Mucosa of descending colon (tissue), 3 donors: ENCODE measurements at regions of chr15 and their contacts with region 1.

Region 1: DNA sequence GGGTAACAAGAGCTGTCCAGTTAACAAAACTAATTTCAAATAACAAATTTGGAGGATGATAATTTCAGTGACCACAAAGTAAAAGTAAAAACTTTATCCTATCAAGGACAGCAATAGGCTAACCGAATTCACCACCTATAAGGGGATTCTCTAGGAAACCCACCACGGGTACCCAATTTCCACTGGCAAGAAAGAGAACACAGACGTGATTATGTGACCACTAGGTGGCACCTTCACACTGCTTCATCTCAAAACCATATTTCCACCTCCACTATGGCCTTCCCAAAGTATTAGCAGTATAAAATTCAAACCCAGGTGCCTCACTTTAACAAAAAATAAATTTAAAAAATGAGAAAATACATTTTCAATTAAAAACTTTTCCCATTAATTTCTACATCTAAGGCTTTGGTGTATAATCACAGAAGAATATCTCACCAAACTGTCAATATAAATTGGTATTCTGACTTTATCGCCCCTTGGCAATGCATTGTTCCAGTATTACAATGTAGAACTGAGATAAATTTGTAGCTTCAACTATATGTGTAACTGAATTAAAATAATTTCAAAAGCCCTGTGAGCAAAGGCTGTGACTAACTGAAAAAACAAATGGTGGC is 96.5 kb downstream of the FSIP1 start:
- DNase-seq: peak in 1 of 3 donors; percentile 79
- ATAC-seq: peak; percentile 84
- H3K4me3 ChIP-seq: no peak overlapping the region
- H3K4me1 ChIP-seq: no peaks in the 10 kb centered on the region
- CTCF ChIP-seq: peak; percentile 61

Region 2: GRCh38 chr15:39530466-39531342 is 155.4 kb before region 1 on chr15:
- intact Hi-C with region 1: no loop called
- DNase-seq: no peak
- ATAC-seq: no peak
- H3K4me3 ChIP-seq: no peak overlapping the region
- H3K4me1 ChIP-seq: no peaks in the 10 kb centered on the region
- CTCF ChIP-seq: no peak

Region 3: DNA sequence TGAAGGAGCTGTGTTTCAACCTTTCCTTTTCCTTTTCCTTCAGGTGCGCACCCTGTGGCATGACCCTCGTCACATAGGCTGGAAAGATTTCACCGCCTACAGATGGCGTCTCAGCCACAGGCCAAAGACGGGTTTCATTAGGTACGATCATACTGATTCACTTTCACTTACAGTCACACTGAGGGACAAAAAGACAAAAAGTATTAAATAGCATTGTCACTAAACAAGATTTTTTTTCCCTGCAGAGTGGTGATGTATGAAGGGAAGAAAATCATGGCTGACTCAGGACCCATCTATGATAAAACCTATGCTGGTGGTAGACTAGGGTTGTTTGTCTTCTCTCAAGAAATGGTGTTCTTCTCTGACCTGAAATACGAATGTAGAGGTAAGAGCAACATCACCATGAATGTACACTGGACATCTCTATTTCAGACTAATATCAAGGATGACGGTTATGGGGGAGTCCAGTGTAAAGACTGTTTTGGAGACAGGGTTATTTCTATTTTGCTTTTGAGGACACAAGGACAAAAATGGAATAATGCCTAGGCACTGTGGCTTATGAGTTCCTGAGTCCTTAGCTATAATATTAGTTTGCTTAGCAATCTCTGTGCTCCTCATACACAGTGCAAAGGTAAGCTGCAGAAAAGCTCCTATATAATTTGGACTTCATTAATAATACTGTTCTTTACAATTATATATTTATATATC is 91.9 kb before region 1 on chr15:
- intact Hi-C with region 1: loop called in 1 of 2 experiments (anchors 10 kb)
- DNase-seq: peak in 2 of 3 donors; percentile 57 to 72
- ATAC-seq: peak; percentile 60
- H3K4me3 ChIP-seq: no peak overlapping the region
- H3K4me1 ChIP-seq: peaks cover 43% of the 10 kb centered on the region
- CTCF ChIP-seq: no peak

Region 4: DNA sequence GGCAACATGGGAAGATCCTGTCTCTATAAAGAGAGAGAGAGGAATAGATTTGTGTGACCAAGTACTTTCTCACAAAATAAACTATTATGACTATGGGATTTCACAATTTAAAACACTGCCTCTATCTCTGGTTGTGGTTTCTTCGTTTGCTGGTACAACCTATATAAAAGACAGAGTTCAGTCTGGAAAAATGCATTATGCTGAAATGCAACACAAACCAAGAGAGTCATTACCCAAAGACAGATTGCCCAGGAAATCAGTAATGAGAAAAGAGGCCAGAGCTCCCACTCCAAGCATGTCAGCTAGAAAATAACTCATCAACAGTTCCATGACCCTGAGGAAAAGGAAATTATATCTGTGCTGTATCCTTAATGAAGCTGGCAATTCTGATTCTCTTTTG is 210.7 kb after region 1 on chr15:
- intact Hi-C with region 1: no loop called
- DNase-seq: no peak
- ATAC-seq: no peak
- H3K4me3 ChIP-seq: no peak overlapping the region
- H3K4me1 ChIP-seq: no peaks in the 10 kb centered on the region
- CTCF ChIP-seq: no peak